T-cell (primary cell): ENCODE measurements at regions of chr5 and their contacts with region 1.

Region 1: GRCh38 chr5:115096034-115096769 is 73.5 kb downstream of the TRIM36 start:
- DNase-seq: no peak
- ATAC-seq: no peak
- H3K4me3 ChIP-seq: no peak overlapping the region
- H3K4me3 Mint-ChIP-seq: no peak overlapping the region
- H3K27ac ChIP-seq: no peak overlapping the region
- H3K27ac Mint-ChIP-seq: no peak overlapping the region
- H3K4me1 ChIP-seq: no peaks in the 10 kb centered on the region
- H3K4me1 Mint-ChIP-seq: no peaks in the 10 kb centered on the region
- H3K27me3 ChIP-seq: no peaks in the 10 kb centered on the region
- H3K27me3 Mint-ChIP-seq: peaks cover 3 to 11% of the 10 kb centered on the region in 2 donors

Region 2: GRCh38 chr5:115124741-115125140 is 28.5 kb after region 1 on chr5:
- CTCF ChIA-PET with region 1: no interaction called
- POLR2A ChIA-PET with region 1: no interaction called
- DNase-seq: no peak
- ATAC-seq: no peak
- H3K4me3 ChIP-seq: no peak overlapping the region
- H3K4me3 Mint-ChIP-seq: no peak overlapping the region
- H3K27ac ChIP-seq: no peak overlapping the region
- H3K27ac Mint-ChIP-seq: no peak overlapping the region
- H3K4me1 ChIP-seq: no peaks in the 10 kb centered on the region
- H3K4me1 Mint-ChIP-seq: no peaks in the 10 kb centered on the region
- H3K27me3 ChIP-seq: peaks cover 0 to 3% of the 10 kb centered on the region in 2 experiments
- H3K27me3 Mint-ChIP-seq: peaks cover 8 to 9% of the 10 kb centered on the region in 2 donors

Region 3: DNA sequence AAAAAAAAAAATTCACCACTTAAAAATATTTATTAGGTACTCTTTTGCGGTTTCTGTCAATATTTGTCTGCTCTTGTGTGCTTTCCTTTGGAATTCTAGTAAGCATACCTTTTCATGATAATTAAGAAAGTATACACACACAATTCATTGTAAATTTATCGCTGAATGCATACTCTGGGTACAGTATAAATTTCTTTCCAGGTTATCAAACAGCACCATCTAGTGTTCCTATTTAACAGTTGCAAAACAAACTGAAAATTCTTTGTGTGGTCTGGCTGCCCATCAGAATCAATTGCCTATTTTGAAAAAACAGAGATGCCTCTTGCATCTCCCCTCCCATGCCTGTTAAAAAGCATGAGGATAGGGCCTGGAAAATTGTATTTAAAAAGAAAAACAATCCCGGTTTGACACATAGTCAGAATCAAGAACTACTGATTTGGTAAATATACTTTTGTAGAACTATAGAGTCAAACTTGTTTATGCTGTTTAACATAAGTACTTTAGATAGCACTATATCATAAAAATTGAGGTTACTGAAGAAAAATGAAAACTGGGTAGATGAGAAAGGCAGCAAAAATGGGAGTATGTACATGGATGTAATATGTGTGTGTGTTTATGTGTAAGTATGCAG is 150.3 kb after region 1 on chr5:
- CTCF ChIA-PET with region 1: interaction called, 5 to 9 read pairs
- POLR2A ChIA-PET with region 1: interaction called in 1 of 2 experiments, 10 read pairs
- DNase-seq: peak in 1 of 35 experiments; percentile 59
- ATAC-seq: peak in 3 of 4 experiments; percentile 44 to 61 (median 59)
- H3K4me3 ChIP-seq: no peak overlapping the region
- H3K4me3 Mint-ChIP-seq: no peak overlapping the region
- H3K27ac ChIP-seq: no peak overlapping the region
- H3K27ac Mint-ChIP-seq: no peak overlapping the region
- H3K4me1 ChIP-seq: no peaks in the 10 kb centered on the region
- H3K4me1 Mint-ChIP-seq: peaks cover 21 to 27% (median 24%) of the 10 kb centered on the region in 3 donors
- H3K27me3 ChIP-seq: no peaks in the 10 kb centered on the region
- H3K27me3 Mint-ChIP-seq: no peaks in the 10 kb centered on the region